ENCODE measurements at regions of chr3 and their contacts with region 1.

Region 1: DNA sequence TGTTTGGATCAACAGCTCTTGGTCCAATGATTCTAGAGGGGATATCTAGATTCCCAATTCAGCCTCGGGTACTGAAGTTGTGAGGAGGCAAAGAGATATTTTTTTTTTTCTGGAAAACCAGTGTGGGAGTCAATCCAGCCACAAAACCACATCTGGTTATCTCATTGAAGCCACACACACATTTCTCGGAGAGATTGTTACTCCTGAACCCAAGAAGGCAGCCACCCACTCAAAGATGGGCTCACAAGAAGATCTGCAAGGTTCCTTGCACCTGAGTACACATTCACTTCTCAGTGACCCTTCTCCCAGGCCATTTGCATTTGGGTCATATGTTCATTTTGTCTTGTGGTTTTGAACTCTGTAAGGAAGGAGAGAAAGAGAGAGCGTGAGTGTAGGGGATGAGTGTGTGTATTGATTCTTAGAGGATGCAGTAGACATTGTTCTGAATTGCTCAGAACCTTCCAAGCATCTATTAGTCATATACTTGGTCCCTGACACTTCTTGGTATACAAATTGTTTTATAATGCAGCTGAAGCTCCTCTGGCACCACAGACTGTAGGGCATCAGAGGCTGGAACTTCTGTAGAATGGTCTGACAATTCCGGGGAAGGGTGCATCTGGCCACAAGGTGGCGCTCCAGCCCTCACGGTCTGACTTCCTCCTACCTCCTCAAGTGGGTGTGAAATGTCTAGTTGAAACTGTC is 39.3 kb upstream of the TRA2B start:
- H3K4me3 Mint-ChIP-seq: no peak overlapping the region
- H3K27ac Mint-ChIP-seq: no peak overlapping the region
- H3K4me1 Mint-ChIP-seq: peaks cover 11% of the 10 kb centered on the region
- H3K27me3 Mint-ChIP-seq: no peaks in the 10 kb centered on the region

Region 2: GRCh38 chr3:186121968-186122367 is 144.8 kb after region 1 on chr3:
- intact Hi-C with region 1: no loop called
- H3K4me3 Mint-ChIP-seq: no peak overlapping the region
- H3K27ac Mint-ChIP-seq: no peak overlapping the region
- H3K4me1 Mint-ChIP-seq: no peaks in the 10 kb centered on the region
- H3K27me3 Mint-ChIP-seq: peaks cover 34% of the 10 kb centered on the region

Region 3: GRCh38 chr3:186235554-186235953 is 258.4 kb after region 1 on chr3:
- intact Hi-C with region 1: no loop called
- H3K4me3 Mint-ChIP-seq: no peak overlapping the region
- H3K27ac Mint-ChIP-seq: no peak overlapping the region
- H3K4me1 Mint-ChIP-seq: no peaks in the 10 kb centered on the region
- H3K27me3 Mint-ChIP-seq: no peaks in the 10 kb centered on the region

Region 4: GRCh38 chr3:186247821-186248814 is 271.0 kb after region 1 on chr3:
- intact Hi-C with region 1: loop called (anchors 2 kb)
- H3K4me3 Mint-ChIP-seq: no peak overlapping the region
- H3K27ac Mint-ChIP-seq: peak overlapping the region; percentile 75
- H3K4me1 Mint-ChIP-seq: peaks cover 36% of the 10 kb centered on the region
- H3K27me3 Mint-ChIP-seq: peaks cover 3% of the 10 kb centered on the region